HAP-1 (cell line): ENCODE measurements at regions of chr15 and their contacts with region 1.

Region 1: GRCh38 chr15:81106560-81106959 is 27.5 kb upstream of the CFAP161 start:
- DNase-seq: peak; percentile 69 to 72
- H3K4me3 ChIP-seq: no peak overlapping the region
- H3K4me1 ChIP-seq: peaks cover under 1% of the 10 kb centered on the region; the same call in 1 of the 2 replicates
- H3K27me3 ChIP-seq: peaks cover 39% of the 10 kb centered on the region

Region 2: DNA sequence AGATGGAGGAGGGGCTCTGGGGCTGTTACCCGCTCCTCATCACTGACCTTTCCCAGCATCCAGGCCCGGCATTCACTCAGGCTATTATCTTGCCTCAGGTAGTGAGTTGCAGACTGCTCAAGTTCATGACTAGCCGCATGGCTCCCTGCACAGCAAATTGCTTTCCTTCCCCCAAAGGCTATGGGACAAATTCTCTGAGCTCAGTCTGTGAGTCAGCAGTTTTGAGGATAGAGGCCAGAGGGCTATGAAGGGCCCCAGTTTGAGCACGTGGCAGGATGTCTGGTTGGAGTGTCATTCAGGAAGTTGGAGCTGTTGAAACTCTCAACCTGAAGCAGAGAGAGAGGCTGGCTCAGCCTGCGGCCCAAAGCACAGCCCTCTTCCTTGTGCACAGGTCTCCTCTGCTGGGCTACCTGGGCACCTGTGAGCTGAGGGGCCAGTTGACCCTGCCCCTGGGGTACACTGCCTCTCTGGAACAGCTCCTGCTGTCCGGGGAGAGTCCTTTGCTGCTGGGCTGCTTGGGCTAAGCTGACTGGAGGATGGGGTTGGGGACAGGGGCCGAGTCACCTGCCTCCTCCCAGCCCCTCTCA is 945.9 kb before region 1 on chr15:
- in situ Hi-C with region 1: no loop called
- DNase-seq: no peak
- H3K4me3 ChIP-seq: no peak overlapping the region
- H3K4me1 ChIP-seq: no peaks in the 10 kb centered on the region
- H3K27me3 ChIP-seq: no peaks in the 10 kb centered on the region

Region 3: GRCh38 chr15:80289528-80290495 is 816.7 kb before region 1 on chr15:
- in situ Hi-C with region 1: no loop called
- DNase-seq: no peak
- H3K4me3 ChIP-seq: no peak overlapping the region
- H3K4me1 ChIP-seq: no peaks in the 10 kb centered on the region
- H3K27me3 ChIP-seq: no peaks in the 10 kb centered on the region

Region 4: GRCh38 chr15:80977627-80978036 is 128.9 kb before region 1 on chr15:
- in situ Hi-C with region 1: loop called (anchors 5 kb)
- DNase-seq: peak; percentile 90 to 93
- H3K4me3 ChIP-seq: no peak overlapping the region
- H3K4me1 ChIP-seq: no peaks in the 10 kb centered on the region; the same call in 1 of the 2 replicates
- H3K27me3 ChIP-seq: no peaks in the 10 kb centered on the region